Sciatic nerve (tissue), 2 donors: ENCODE measurements at regions of chr5 and their contacts with region 1.

Region 1: DNA sequence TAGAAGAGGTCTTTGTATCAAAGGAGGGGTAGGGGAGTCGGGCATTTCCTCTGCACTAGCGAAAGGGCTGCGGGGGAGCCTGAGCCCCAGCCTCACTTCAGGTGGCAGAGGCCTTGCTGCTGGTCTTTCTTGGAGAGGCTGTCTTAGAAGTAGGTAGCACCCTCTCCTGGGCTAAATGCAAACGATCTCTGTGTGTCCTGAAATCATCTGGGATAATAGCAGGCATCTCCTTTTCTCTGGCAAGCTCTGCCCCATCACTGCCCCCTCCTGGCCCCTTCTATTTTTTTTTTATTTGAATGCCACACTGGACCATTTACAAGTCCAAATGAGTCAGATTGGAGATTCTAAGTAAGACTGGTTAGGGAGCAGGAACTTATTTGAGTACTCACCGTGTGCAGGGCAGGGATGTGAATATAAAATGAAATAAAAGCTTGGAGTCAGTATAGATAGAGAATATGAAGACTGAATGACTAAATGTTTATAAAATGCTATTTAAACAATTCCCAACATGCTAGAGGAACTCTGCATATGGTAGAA is 137.1 kb downstream of the FGF1 start:
- DNase-seq: peak; percentile 60
- ATAC-seq: peak; percentile 92

Region 2: DNA sequence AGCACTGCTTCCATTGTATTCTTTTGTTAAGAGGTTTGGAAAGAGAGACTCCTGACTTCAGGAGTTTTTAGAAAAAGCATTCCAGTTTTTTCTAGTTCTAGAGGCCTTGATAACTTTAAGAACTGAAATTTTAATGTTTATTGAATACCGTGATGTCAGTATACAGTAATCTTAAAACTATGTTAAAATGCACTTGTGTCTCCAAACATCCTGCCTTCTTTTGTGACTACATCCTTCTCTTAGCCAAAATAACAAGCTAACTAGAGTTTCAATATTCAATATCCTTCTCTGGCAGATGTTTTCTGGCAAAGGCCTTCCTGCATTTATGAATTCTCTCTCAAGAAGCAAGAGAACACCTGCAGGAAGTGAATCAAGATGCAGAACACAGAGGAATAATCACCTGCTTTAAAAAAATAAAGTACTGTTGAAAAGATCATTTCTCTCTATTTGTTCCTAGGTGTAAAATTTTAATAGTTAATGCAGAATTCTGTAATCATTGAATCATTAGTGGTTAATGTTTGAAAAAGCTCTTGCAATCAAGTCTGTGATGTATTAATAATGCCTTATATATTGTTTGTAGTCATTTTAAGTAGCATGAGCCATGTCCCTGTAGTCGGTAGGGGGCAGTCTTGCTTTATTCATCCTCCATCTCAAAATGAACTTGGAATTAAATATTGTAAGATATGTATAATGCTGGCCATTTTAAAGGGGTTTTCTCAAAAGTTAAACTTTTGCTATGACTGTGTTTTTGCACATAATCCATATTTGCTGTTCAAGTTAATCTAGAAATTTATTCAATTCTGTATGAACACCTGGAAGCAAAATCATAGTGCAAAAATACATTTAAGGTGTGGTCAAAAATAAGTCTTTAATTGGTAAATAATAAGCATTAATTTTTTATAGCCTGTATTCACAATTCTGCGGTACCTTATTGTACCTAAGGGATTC is 397.1 kb before region 1 on chr5:
- intact Hi-C with region 1: loop called (anchors 5 kb)
- DNase-seq: no peak
- ATAC-seq: peak; percentile 75

Region 3: GRCh38 chr5:142529626-142530278 is 19.1 kb before region 1 on chr5:
- intact Hi-C with region 1: no loop called
- DNase-seq: no peak
- ATAC-seq: no peak

Region 4: DNA sequence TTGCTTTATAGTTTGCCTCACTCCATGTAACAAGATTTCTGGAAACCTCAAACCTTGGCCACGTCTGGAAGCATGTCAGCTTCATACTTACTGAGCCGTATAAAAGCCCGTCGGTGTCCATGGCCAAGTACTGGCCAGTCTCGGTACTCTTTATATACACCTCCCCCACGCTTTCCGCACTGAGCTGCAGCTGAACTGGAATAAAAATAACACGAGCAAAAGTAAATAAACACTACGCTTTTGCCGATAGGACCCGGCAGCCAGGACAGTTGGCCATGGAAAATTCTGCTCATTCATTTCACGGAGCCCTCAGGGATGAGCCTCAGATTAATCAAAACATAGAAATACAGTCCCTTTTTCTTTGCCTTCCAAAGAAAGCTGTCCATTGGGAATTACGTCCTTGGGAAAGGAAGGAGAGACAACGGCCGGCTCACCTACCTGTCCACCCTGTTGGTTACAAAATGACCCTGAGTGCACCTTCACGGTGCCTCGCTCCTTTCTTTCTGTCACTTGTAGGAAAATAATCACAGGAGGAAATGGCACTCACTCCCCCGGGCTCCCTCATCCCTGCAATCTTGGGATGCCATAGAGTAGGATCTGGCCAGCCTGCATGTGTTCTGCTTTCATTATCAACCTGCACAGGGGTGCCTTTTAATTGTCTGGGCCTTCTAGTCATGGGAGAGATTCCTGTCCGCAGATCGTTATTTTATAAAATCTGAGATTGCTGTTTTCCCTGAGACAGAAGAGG is 52.0 kb after region 1 on chr5:
- intact Hi-C with region 1: no loop called
- DNase-seq: peak; percentile 75
- ATAC-seq: peak; percentile 94